ENCODE measurements at regions of chr2 and their contacts with region 1.

Region 1: DNA sequence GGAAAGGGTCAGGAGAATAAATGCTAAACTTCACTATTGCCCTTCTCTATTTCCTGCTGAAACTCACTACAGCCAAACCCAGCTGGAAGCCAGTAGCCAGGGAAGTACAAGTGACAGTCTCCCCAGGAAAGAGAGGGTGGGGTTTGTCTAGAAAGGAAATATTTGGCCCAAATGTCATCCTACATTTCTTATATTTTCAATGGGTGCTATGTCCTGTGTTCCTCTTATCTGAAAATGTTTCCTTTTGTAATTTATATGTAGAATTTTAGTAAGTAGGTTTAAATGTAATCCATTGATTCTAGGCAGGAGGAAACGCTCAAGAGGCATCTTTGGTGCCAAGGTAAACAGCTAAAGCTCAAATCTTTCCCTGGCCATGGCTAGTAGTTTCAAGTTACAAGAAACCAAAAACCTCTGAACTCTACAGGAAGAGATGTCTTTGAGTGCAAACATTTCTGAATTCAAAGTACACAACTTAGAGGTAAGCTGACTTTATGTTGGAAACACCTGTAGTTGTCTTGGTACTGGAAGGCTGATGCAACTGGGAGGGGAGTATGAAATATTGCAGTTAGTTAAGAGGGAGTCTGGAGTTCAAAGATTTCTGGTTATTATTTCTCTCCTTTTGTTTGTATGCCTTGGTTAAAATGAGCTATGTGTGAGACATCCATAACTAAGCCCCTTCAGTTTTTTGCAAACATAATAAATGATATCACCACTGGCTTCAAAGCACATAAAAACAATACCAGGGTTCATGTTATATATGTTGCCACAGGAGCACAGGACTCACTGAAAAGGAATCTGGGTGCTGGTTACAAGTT is 356.1 kb upstream of the ZC3H15 start:
- DNase-seq: peak in 1 of 2 experiments; percentile 37
- H3K4me3 ChIP-seq: no peak overlapping the region
- H3K4me3 Mint-ChIP-seq: no peak overlapping the region
- H3K27ac Mint-ChIP-seq: peak overlapping the region; percentile 16
- H3K4me1 ChIP-seq: no peaks in the 10 kb centered on the region
- H3K4me1 Mint-ChIP-seq: peaks cover 9% of the 10 kb centered on the region
- H3K27me3 ChIP-seq: no peaks in the 10 kb centered on the region
- H3K27me3 Mint-ChIP-seq: no peaks in the 10 kb centered on the region
- CTCF ChIP-seq: no peak

Region 2: DNA sequence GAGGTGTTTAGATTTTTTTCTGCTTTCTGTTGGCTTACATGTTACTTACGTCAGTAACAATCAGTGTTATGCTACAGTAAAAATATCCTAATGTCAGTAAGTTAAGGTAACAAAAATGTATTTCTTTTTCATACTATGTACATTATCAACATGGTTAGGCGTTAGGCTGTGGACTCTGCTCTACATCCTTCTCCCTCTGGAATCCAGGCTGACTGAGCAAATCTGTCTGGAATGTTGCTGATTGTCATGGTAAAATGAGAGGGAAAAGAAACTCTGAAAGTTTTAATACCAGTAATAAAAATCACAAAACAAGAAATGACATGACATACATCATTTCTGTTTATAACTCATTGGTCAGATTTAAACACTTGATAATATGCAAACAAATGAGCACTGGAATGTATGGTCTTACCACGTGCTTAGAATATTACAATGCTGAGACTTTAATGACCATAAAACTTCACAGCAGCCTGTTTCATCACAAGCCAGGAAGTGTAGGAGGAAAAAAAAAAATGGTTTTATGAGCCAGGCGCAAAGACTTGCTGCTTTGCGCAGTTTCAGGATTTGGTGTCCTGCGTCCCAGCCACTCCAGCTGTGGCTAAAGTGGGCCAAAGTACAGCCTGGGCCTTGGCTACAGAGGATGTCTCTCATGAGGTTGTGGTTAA is 139.0 kb before region 1 on chr2:
- CTCF ChIA-PET with region 1: no interaction called
- POLR2A ChIA-PET with region 1: no interaction called
- intact Hi-C with region 1: loop called (anchors 2 kb)
- DNase-seq: peak; percentile 34 to 51
- H3K4me3 ChIP-seq: no peak overlapping the region
- H3K4me3 Mint-ChIP-seq: no peak overlapping the region
- H3K27ac Mint-ChIP-seq: peak overlapping the region; percentile 54
- H3K4me1 ChIP-seq: peaks cover 29% of the 10 kb centered on the region
- H3K4me1 Mint-ChIP-seq: peaks cover 16% of the 10 kb centered on the region
- H3K27me3 ChIP-seq: no peaks in the 10 kb centered on the region
- H3K27me3 Mint-ChIP-seq: no peaks in the 10 kb centered on the region
- CTCF ChIP-seq: no peak

Region 3: GRCh38 chr2:186059096-186059495 is 70.9 kb before region 1 on chr2:
- CTCF ChIA-PET with region 1: no interaction called
- POLR2A ChIA-PET with region 1: no interaction called
- intact Hi-C with region 1: no loop called
- DNase-seq: no peak
- H3K4me3 ChIP-seq: no peak overlapping the region
- H3K4me3 Mint-ChIP-seq: no peak overlapping the region
- H3K27ac Mint-ChIP-seq: no peak overlapping the region
- H3K4me1 ChIP-seq: no peaks in the 10 kb centered on the region
- H3K4me1 Mint-ChIP-seq: no peaks in the 10 kb centered on the region
- H3K27me3 ChIP-seq: no peaks in the 10 kb centered on the region
- H3K27me3 Mint-ChIP-seq: no peaks in the 10 kb centered on the region
- CTCF ChIP-seq: no peak

Region 4: GRCh38 chr2:186105016-186105724 is 24.8 kb before region 1 on chr2:
- CTCF ChIA-PET with region 1: no interaction called
- POLR2A ChIA-PET with region 1: no interaction called
- intact Hi-C with region 1: no loop called
- DNase-seq: no peak
- H3K4me3 ChIP-seq: no peak overlapping the region
- H3K4me3 Mint-ChIP-seq: no peak overlapping the region
- H3K27ac Mint-ChIP-seq: no peak overlapping the region
- H3K4me1 ChIP-seq: no peaks in the 10 kb centered on the region
- H3K4me1 Mint-ChIP-seq: no peaks in the 10 kb centered on the region
- H3K27me3 ChIP-seq: no peaks in the 10 kb centered on the region
- H3K27me3 Mint-ChIP-seq: peaks cover 2% of the 10 kb centered on the region
- CTCF ChIP-seq: no peak

Region 5: DNA sequence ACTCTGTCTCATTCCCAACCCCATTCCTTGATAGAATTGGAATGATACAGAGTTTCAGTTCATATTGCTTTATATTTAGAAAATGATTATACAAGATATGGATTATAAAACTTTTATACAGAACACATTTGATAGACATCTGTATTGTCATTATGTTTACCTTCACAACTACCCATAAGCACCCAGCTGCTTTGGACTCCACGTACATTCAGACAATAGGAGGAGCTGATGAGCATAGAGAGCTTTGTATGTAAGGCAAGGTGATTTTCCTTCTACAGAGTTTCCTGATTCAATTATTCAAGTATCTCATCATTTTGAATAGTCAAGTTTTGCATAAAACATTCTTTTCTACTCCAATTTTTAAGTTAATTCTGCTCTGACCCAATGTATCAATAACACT is 37.2 kb after region 1 on chr2:
- CTCF ChIA-PET with region 1: no interaction called
- POLR2A ChIA-PET with region 1: no interaction called
- intact Hi-C with region 1: loop called (anchors 5 kb)
- DNase-seq: no peak
- H3K4me3 ChIP-seq: no peak overlapping the region
- H3K4me3 Mint-ChIP-seq: no peak overlapping the region
- H3K27ac Mint-ChIP-seq: no peak overlapping the region
- H3K4me1 ChIP-seq: no peaks in the 10 kb centered on the region
- H3K4me1 Mint-ChIP-seq: no peaks in the 10 kb centered on the region
- H3K27me3 ChIP-seq: no peaks in the 10 kb centered on the region
- H3K27me3 Mint-ChIP-seq: no peaks in the 10 kb centered on the region
- CTCF ChIP-seq: no peak

Region 6: GRCh38 chr2:186205254-186205911 is 75.4 kb after region 1 on chr2:
- CTCF ChIA-PET with region 1: no interaction called
- POLR2A ChIA-PET with region 1: no interaction called
- intact Hi-C with region 1: no loop called
- DNase-seq: no peak
- H3K4me3 ChIP-seq: no peak overlapping the region
- H3K4me3 Mint-ChIP-seq: no peak overlapping the region
- H3K27ac Mint-ChIP-seq: no peak overlapping the region
- H3K4me1 ChIP-seq: no peaks in the 10 kb centered on the region
- H3K4me1 Mint-ChIP-seq: no peaks in the 10 kb centered on the region
- H3K27me3 ChIP-seq: no peaks in the 10 kb centered on the region
- H3K27me3 Mint-ChIP-seq: no peaks in the 10 kb centered on the region
- CTCF ChIP-seq: no peak

Measured in Caco-2 (cell line).